Cardiac septum (tissue), 1 donor: ENCODE measurements at regions of chr13 and their contacts with region 1.

Region 1: DNA sequence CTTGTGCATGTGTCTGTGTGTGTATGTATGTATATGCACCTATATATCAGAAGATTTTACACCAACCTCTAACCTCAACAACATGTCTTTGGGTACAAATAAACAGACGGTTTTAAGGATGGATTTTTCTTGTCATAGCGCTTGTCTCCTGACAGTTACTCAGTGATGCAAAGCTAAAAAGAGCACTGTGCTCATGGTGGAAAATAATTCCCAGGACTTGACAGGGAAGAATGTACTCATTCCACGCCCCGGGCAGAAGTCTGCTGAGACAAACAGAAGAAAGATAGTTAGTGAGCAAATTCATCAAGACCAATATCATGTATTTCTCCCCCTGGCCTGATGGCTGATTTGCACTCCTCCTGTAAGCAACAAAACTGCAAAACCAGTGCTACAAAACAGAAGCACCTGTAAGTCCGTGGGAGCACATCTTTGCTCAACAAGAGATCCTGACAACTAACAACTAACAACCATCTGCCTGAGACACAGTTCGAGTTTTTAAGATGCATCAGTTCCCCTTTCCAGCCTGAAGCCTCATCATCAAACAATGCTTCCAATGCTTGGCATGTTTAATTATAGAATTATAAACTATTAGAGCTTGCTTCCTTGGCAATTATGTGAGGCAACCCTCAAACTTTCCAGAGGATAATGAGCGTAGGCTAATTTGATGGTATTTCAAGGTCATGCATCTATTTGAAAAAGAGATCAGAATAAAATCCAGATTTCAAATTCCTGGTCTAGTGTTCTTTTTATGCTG is 812.7 kb upstream of the MIR17HG start:
- DNase-seq: no peak

Region 2: DNA sequence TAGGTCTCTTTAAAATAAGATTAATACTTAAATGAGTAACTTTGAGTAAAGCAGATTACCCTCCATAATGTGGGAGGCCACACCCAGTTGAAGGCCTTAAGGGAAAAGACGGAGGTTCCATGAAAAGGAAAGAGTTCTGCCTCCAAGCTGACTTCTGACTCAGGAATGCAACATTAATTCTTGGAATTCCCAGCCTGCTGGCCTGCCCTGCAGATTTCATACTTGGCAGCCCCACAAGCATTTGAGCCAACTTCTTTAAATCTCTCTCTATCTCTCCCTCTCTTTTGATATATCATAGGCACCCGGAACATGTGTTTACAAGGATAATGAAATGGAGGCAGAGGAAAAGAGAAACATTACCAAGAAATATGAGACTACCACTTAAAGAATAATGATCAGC is 89.6 kb before region 1 on chr13:
- intact Hi-C with region 1: no loop called
- DNase-seq: no peak

Region 3: GRCh38 chr13:90502153-90502552 is 32.6 kb before region 1 on chr13:
- intact Hi-C with region 1: loop called (anchors 5 kb)
- DNase-seq: no peak

Region 4: DNA sequence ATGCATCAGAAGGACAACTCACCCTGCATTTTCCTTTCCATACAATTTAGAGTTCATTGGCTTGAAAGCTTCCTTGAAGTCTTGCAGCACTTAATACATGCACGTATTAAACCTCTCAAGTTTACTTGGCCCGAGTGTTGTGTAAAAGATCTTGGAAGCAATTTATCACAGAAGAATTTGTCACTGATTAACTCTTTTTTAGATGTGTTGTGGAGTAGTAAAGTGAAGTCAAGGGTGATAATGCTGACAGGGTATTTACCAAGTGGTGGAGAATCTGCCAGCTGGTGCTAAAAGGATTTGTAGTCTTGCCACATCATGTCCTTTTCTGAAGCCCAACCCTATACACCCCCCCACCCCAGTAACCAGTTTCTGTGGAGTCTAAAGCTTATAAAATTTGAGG is 391.7 kb after region 1 on chr13:
- intact Hi-C with region 1: no loop called
- DNase-seq: no peak